A549 (cell line): ENCODE measurements at regions of chr9 and their contacts with region 1.

Region 1: GRCh38 chr9:136488247-136489214 is 5.7 kb upstream of the SEC16A start:
- DNase-seq: peak; percentile 54 to 57
- ATAC-seq: peak; percentile 35 to 58; a peak in 4 of 6 replicates
- H3K4me3 ChIP-seq: no peak overlapping the region
- H3K27ac ChIP-seq: no peak overlapping the region
- H3K4me1 ChIP-seq: peaks cover 9% of the 10 kb centered on the region
- CTCF ChIP-seq: peak; percentile 96
- EP300 ChIP-seq: no peak
- POLR2A ChIP-seq: no peak
- RAD21 ChIP-seq: peak; percentile 98

Region 2: GRCh38 chr9:136170006-136170901 is 318.3 kb before region 1 on chr9:
- CTCF ChIA-PET with region 1: no interaction called
- POLR2A ChIA-PET with region 1: no interaction called
- DNase-seq: peak; percentile 36 to 61
- ATAC-seq: peak; percentile 67 to 92; a peak in 5 of 6 replicates
- H3K4me3 ChIP-seq: no peak overlapping the region
- H3K27ac ChIP-seq: peak overlapping the region in 1 of 2 experiments; percentile 33; a peak in 1 of 6 replicates
- H3K4me1 ChIP-seq: peaks cover 7% of the 10 kb centered on the region; the same call in 1 of the 3 replicates
- CTCF ChIP-seq: peak; percentile 72
- EP300 ChIP-seq: no peak
- POLR2A ChIP-seq: no peak
- RAD21 ChIP-seq: peak; percentile 69 to 75

Region 3: GRCh38 chr9:136521537-136521936 is 33.0 kb after region 1 on chr9:
- CTCF ChIA-PET with region 1: interaction called, 35 read pairs
- POLR2A ChIA-PET with region 1: no interaction called
- DNase-seq: no peak
- ATAC-seq: peak in 1 of 2 experiments; percentile 13; a peak in 1 of 6 replicates
- H3K4me3 ChIP-seq: no peak overlapping the region
- H3K27ac ChIP-seq: peak overlapping the region; percentile 91 to 93
- H3K4me1 ChIP-seq: peaks cover 48% of the 10 kb centered on the region
- CTCF ChIP-seq: no peak
- EP300 ChIP-seq: no peak
- POLR2A ChIP-seq: no peak
- RAD21 ChIP-seq: no peak

Region 4: GRCh38 chr9:136533775-136534157 is 45.2 kb after region 1 on chr9:
- CTCF ChIA-PET with region 1: interaction called, 70 read pairs
- POLR2A ChIA-PET with region 1: no interaction called
- DNase-seq: no peak
- ATAC-seq: no peak
- H3K4me3 ChIP-seq: no peak overlapping the region
- H3K27ac ChIP-seq: peak overlapping the region in 1 of 2 experiments; percentile 36; a peak in 1 of 6 replicates
- H3K4me1 ChIP-seq: peaks cover 33% of the 10 kb centered on the region
- CTCF ChIP-seq: no peak
- EP300 ChIP-seq: no peak
- POLR2A ChIP-seq: no peak
- RAD21 ChIP-seq: no peak

Region 5: GRCh38 chr9:136587145-136587943 is 98.8 kb after region 1 on chr9:
- CTCF ChIA-PET with region 1: interaction called, 10 read pairs
- POLR2A ChIA-PET with region 1: no interaction called
- DNase-seq: no peak
- ATAC-seq: no peak
- H3K4me3 ChIP-seq: no peak overlapping the region
- H3K27ac ChIP-seq: no peak overlapping the region; a peak in 1 of 6 replicates
- H3K4me1 ChIP-seq: 0 out of 3 replicates have a peak, but pooled peaks cover 9% of the 10 kb centered on the region
- CTCF ChIP-seq: no peak
- EP300 ChIP-seq: no peak
- POLR2A ChIP-seq: no peak
- RAD21 ChIP-seq: no peak

Region 6: DNA sequence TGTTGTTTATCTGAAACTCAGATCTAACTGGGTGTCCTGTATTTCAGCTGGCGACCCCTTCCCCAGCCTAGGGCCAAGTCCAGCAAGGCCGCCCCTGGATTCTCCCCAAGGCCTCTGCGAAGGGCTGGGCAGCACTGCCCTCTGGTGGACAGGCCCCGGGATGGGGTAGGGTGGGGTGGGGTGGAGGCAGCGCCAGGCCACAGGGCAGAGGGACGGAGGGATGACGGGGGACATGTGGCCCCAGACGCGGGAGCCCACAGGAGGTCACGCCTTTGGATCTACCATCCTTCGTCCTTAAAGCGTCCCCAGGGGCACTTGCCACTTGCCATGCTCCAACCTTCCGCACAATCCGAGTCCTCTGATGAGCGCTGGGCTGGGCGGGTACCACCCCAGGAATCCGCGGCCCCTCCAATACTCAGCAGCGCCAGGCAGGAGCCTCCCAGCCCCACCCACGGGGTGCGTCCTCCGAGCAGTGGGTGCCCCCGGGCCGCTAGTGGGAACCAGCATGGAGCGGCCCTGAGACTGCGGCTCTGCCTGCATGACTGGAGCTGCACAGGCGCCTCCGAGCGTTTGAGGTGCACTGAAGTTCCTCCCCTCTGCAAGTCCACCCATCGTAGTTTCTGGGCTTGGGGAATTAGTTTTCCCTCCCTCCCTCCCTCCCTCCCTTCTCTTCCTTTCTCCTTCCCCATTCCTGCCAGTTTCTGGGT is 205.9 kb after region 1 on chr9:
- CTCF ChIA-PET with region 1: interaction called, 19 read pairs
- POLR2A ChIA-PET with region 1: interaction called, 3 read pairs
- DNase-seq: peak; percentile 75 to 90
- ATAC-seq: peak; percentile 73 to 87
- H3K4me3 ChIP-seq: peak overlapping the region; percentile 19; the same call in 2 of the 3 replicates
- H3K27ac ChIP-seq: peak overlapping the region; percentile 73 to 87
- H3K4me1 ChIP-seq: peaks cover 78% of the 10 kb centered on the region
- CTCF ChIP-seq: peak; percentile 90
- EP300 ChIP-seq: no peak
- POLR2A ChIP-seq: no peak
- RAD21 ChIP-seq: peak; percentile 87 to 92

Region 7: GRCh38 chr9:137205126-137206069 is 716.9 kb after region 1 on chr9 and contains the starts of genes NDOR1 and TMEM203:
- CTCF ChIA-PET with region 1: no interaction called
- POLR2A ChIA-PET with region 1: no interaction called
- DNase-seq: peak; percentile 84 to 91
- ATAC-seq: peak; percentile 69 to 70
- H3K4me3 ChIP-seq: peak within 1 kb of the TSS; percentile 93
- H3K27ac ChIP-seq: peak within 1 kb of the TSS; percentile 93 to 97
- H3K4me1 ChIP-seq: peaks cover 28% of the 10 kb centered on the region
- CTCF ChIP-seq: no peak
- EP300 ChIP-seq: no peak
- POLR2A ChIP-seq: peak; percentile 74
- RAD21 ChIP-seq: no peak
- polyA plus RNA-seq, gene NDOR1: 5.6 and 6.4 TPM in 2 replicates
- polyA plus RNA-seq, gene TMEM203: 47.3 and 51.8 TPM in 2 replicates